ENCODE measurements at regions of chr7 and their contacts with region 1.

Region 1: DNA sequence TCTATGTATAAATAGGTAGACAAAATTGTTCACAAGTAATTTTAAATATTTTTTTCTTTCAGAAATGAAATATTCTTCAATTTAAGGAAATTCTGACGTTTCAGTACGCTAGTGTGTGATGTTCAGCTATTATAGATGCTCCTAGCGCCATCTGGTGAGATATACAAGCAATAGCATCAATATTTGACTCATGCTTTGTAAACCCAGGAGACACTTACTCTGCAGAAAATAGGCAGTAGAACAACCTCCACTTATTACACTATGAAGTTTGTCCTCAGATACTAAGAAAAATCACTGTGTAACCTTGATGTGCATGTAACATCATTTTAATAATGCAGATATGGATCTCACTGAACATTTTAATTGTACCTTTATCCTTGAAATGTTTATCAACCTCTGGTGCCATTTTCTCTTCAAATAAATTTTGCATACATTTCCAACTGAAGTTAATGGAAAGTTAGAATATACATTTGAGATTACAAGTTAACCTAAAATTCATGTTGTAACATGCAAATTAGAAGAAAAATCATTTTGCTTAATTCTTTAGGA is 151.5 kb upstream of the FAM3C start:
- DNase-seq: no peak
- ATAC-seq: peak; percentile 64 to 68
- H3K4me3 ChIP-seq: no peak overlapping the region
- H3K27ac ChIP-seq: no peak overlapping the region
- H3K4me1 ChIP-seq: no peaks in the 10 kb centered on the region
- H3K27me3 ChIP-seq: no peaks in the 10 kb centered on the region
- CTCF ChIP-seq: peak; percentile 32 to 73 (median 68)
- POLR2A ChIP-seq: no peak

Region 2: GRCh38 chr7:121126801-121127534 is 420.6 kb before region 1 on chr7:
- in situ Hi-C with region 1: no loop called
- intact Hi-C with region 1: loop called (anchors 5 kb)
- DNase-seq: no peak
- ATAC-seq: no peak
- H3K4me3 ChIP-seq: no peak overlapping the region
- H3K27ac ChIP-seq: no peak overlapping the region
- H3K4me1 ChIP-seq: no peaks in the 10 kb centered on the region
- H3K27me3 ChIP-seq: no peaks in the 10 kb centered on the region
- CTCF ChIP-seq: peak in 1 of 5 experiments; percentile 12
- POLR2A ChIP-seq: no peak

Region 3: DNA sequence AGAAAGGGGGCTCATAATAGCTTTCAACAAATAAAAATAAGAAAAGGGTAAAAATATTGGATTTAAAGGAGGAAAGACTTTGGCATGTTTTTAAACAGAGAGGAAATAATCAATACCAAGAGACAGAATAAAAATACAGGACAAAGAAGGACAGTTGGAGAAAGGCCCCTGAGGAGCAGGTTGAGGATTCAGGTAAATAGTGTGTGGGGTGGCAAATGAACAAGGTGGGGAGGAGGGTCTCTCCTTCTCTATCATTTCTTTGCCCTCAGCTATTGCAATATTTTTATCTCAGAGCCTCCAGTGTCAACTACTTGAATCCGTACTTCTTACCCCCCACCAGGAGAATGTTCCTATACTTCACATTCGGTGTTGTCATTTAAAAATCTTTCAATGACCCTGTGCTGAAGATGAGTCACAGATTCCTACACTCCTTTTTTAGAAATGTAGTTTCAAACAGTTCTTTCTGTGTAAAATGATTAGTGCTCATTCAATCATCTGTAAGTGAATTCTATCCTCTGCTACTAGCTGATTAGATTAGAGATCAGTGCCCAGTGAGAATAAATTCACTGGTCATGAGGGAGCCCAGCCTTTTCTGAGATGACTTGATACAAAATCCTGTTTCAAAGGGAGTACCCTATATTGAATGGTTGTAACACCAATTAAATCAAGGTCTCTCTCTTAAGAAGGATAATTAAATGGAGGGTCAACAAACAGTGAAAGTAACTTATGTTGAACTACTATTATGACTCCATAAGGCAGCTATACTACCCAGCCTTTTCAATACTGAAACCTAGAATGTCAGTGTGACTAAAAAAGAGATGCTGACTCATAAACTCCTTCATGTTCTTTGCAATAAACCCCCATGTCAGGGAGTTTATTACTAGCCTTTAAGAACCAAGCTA is 269.2 kb before region 1 on chr7:
- in situ Hi-C with region 1: no loop called
- intact Hi-C with region 1: no loop called
- DNase-seq: no peak
- ATAC-seq: peak in 1 of 2 donors; percentile 50
- H3K4me3 ChIP-seq: no peak overlapping the region
- H3K27ac ChIP-seq: peak overlapping the region; percentile 50 to 60 (median 57)
- H3K4me1 ChIP-seq: peaks cover 0 to 3% of the 10 kb centered on the region in 2 donors
- H3K27me3 ChIP-seq: no peaks in the 10 kb centered on the region
- CTCF ChIP-seq: no peak
- POLR2A ChIP-seq: no peak

Region 4: DNA sequence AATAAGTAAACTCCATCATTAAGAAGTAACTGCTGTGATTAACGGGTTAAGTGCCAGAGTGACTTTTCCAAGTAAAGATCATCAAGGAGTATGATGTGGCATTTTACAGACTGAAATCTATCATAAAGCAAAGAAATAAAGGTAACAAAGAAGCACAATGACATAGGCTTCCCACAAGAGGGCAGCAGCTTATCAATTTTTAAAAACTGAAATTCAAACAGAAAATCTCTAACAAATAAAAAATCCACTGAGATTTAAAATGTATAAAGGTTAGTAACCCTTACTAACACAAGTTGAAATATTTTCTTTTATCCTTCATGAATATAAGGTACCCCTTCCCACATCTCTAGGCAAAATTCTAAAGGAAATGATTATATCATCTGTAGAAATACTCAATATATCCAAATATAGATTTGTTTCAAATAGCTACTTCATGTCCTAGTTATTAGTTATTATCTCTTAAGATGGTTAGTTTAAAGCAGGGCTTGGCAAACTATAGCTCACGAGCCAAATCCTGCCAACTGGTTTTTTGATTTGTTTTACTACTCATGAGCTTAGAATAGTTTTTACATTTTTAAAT is 180.7 kb before region 1 on chr7:
- in situ Hi-C with region 1: loop called (anchors 5 kb)
- intact Hi-C with region 1: loop called (anchors 1 kb)
- DNase-seq: no peak
- ATAC-seq: no peak
- H3K4me3 ChIP-seq: no peak overlapping the region
- H3K27ac ChIP-seq: no peak overlapping the region
- H3K4me1 ChIP-seq: no peaks in the 10 kb centered on the region
- H3K27me3 ChIP-seq: no peaks in the 10 kb centered on the region
- CTCF ChIP-seq: peak; percentile 45 to 73 (median 70)
- POLR2A ChIP-seq: no peak

Region 5: GRCh38 chr7:121449329-121449728 is 98.3 kb before region 1 on chr7:
- in situ Hi-C with region 1: no loop called
- intact Hi-C with region 1: no loop called
- DNase-seq: no peak
- ATAC-seq: no peak
- H3K4me3 ChIP-seq: no peak overlapping the region
- H3K27ac ChIP-seq: no peak overlapping the region
- H3K4me1 ChIP-seq: no peaks in the 10 kb centered on the region
- H3K27me3 ChIP-seq: no peaks in the 10 kb centered on the region
- CTCF ChIP-seq: no peak
- POLR2A ChIP-seq: no peak

Region 6: GRCh38 chr7:121595758-121596696 is 48.4 kb after region 1 on chr7:
- in situ Hi-C with region 1: no loop called
- intact Hi-C with region 1: no loop called
- DNase-seq: no peak
- ATAC-seq: no peak
- H3K4me3 ChIP-seq: no peak overlapping the region
- H3K27ac ChIP-seq: no peak overlapping the region
- H3K4me1 ChIP-seq: no peaks in the 10 kb centered on the region
- H3K27me3 ChIP-seq: no peaks in the 10 kb centered on the region
- CTCF ChIP-seq: no peak
- POLR2A ChIP-seq: no peak

Measured in gastrocnemius medialis (tissue), 4 donors.